PC-3 (cell line): ENCODE measurements at regions of chr14 and their contacts with region 1.

Region 1: GRCh38 chr14:58091883-58092630 is 60.0 kb downstream of the ARMH4 start:
- DNase-seq: peak; percentile 92
- ATAC-seq: peak; percentile 89
- H3K4me3 ChIP-seq: no peak overlapping the region
- H3K27ac ChIP-seq: peak overlapping the region; percentile 49
- H3K4me1 ChIP-seq: peaks cover 14% of the 10 kb centered on the region
- H3K27me3 ChIP-seq: peaks cover 15% of the 10 kb centered on the region; the same call in 1 of the 2 replicates
- CTCF ChIP-seq: no peak

Region 2: DNA sequence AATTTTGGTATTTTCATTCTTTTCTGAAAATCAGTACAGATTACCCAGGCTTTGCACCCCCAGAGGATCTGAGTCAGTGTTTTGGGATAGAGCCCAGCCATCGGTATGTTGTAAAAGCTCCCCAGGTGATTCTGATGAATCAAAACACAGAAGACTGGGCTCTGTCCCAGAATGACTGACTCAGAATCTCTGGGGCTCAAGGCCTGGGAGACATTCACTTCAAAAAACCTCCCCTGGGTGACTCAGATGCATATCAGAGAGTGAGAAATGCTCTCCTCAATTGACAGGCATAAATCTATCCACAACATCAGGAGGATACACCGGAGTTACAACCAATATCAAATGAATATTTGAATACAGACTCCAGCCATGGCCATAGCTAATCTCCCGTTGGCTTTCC is 258.7 kb before region 1 on chr14:
- CTCF ChIA-PET with region 1: no interaction called
- POLR2A ChIA-PET with region 1: no interaction called
- intact Hi-C with region 1: loop called (anchors 1 kb)
- DNase-seq: peak; percentile 100
- ATAC-seq: peak; percentile 97
- H3K4me3 ChIP-seq: peak overlapping the region; percentile 4; the same call in 1 of the 2 replicates
- H3K27ac ChIP-seq: peak overlapping the region; percentile 48
- H3K4me1 ChIP-seq: peaks cover 21% of the 10 kb centered on the region
- H3K27me3 ChIP-seq: peaks cover 30% of the 10 kb centered on the region; the same call in 1 of the 2 replicates
- CTCF ChIP-seq: no peak